SK-N-SH (cell line): ENCODE measurements at regions of chr17 and their contacts with region 1.

Region 1: GRCh38 chr17:65122836-65123756 is 14.1 kb upstream of the RGS9 start:
- DNase-seq: peak; percentile 95
- H3K4me3 ChIP-seq: peak overlapping the region; percentile 51 to 70
- H3K27ac ChIP-seq: peak overlapping the region; percentile 57 to 90
- H3K4me1 ChIP-seq: peaks cover 8% of the 10 kb centered on the region in 2 experiments; a peak in 3 of 4 replicates
- H3K27me3 ChIP-seq: no peaks in the 10 kb centered on the region; the same call in 1 of the 2 replicates
- CTCF ChIP-seq: no peak
- EP300 ChIP-seq: no peak
- RAD21 ChIP-seq: 0 out of 2 replicates have a peak, but pooled peaks have one; percentile 25

Region 2: DNA sequence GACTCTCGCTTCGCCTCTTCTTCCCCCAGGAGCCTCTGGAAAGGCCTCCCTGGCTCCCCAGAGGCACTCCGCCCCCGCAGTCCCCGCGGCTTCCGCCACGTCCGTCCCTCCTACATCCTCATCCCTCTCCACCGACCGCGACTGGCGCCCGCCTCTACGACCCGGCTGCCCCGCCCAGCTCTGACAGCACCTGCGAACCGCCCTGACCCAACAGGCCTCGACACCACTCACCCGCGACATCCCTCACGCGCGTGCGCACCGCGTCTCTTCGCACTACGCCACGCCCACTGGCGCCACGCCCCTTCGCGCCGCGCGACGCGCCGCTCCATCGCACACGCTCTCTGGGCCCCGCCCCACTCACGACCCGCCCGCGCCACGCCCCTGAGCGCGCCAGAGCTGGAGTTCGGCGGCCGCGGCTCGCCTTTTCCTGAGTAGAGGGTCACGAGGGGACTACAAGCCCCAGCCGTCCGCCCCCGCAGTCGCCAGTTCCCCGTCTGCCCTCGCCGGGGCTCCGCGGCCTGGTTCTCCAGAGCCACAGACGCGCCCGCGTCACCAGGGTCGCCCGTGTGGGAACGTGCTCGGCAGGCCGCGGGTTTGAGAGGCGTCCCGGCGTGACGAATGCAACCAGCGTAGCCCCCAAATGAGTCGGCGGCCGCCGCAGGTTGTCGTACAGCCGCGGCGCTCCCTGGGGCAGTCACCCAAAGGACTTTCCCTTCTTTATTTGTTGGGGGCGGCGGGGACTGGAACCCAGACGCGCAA is 147.6 kb before region 1 on chr17:
- CTCF ChIA-PET with region 1: interaction called, 3 read pairs
- POLR2A ChIA-PET with region 1: interaction called, 10 read pairs
- DNase-seq: peak; percentile 99
- H3K4me3 ChIP-seq: peak overlapping the region; percentile 68 to 74
- H3K27ac ChIP-seq: peak overlapping the region; percentile 86 to 95
- H3K4me1 ChIP-seq: peaks cover 3 to 5% of the 10 kb centered on the region in 2 experiments; a peak in 1 of 4 replicates
- H3K27me3 ChIP-seq: no peaks in the 10 kb centered on the region
- CTCF ChIP-seq: no peak
- EP300 ChIP-seq: no peak; a peak in 1 of 4 replicates
- RAD21 ChIP-seq: no peak; the same call in 1 of the 2 replicates

Region 3: GRCh38 chr17:65143889-65144604 is 21.0 kb after region 1 on chr17:
- CTCF ChIA-PET with region 1: no interaction called
- POLR2A ChIA-PET with region 1: no interaction called
- DNase-seq: no peak
- H3K4me3 ChIP-seq: no peak overlapping the region
- H3K27ac ChIP-seq: no peak overlapping the region
- H3K4me1 ChIP-seq: peaks cover 0 to 4% of the 10 kb centered on the region in 2 experiments; a peak in 1 of 4 replicates
- H3K27me3 ChIP-seq: peaks cover 6% of the 10 kb centered on the region; the same call in 1 of the 2 replicates
- CTCF ChIP-seq: no peak
- EP300 ChIP-seq: no peak
- RAD21 ChIP-seq: no peak